ENCODE measurements at regions of chr19 and their contacts with region 1.

Region 1: GRCh38 chr19:16095071-16095571 is 16.6 kb upstream of the RAB8A start:
- DNase-seq: peak in 4 of 10 donors; percentile 36 to 64 (median 47)
- ATAC-seq: peak; percentile 78 to 82
- H3K4me3 Mint-ChIP-seq: peak overlapping the region; percentile 30 to 82 (median 69)
- H3K27ac Mint-ChIP-seq: peak overlapping the region; percentile 77 to 96 (median 88)
- H3K4me1 Mint-ChIP-seq: peaks cover 17 to 41% (median 33%) of the 10 kb centered on the region in 4 donors
- H3K27me3 Mint-ChIP-seq: no peaks in the 10 kb centered on the region

Region 2: DNA sequence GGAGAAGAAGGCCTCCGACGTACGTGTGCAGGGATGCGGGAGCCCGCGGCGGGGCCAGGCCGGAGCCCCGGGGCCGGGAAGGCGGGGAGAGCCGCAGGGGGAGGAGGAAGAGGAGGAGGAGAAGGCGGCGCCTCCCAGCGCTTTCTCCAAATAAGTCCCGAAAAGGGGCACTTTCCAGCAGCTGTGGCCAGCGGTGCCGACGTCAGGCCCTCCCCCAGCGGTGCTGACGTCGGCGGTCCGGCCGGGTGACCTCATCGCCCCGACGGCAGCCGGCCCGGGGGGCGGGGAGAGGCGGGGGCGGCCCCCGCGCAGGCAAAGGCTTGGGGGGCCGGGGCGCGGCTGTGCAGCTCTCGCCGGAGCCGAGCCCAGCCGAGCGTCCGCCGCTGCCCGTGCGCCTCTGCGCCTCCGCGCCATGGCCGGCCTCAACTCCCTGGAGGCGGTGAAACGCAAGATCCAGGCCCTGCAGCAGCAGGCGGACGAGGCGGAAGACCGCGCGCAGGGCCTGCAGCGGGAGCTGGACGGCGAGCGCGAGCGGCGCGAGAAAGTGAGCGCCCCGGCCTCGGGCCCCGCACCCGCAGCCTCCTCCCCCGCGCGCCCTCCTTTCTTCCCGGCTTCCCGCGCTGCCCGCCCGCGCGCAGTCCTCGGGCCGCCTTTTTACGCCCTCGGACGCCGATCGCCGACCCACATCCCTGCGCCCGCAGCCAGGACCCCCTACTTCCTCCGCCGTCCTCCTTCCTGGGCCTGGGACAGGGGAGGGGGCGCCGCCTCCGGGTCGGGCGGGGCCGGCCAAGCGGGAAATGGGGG is 18.8 kb before region 1 on chr19 and contains the start of gene TPM4:
- POLR2A ChIA-PET with region 1: interaction called, 12 read pairs
- DNase-seq: peak; percentile 53 to 86 (median 68)
- ATAC-seq: peak; percentile 35 to 43
- H3K4me3 Mint-ChIP-seq: peak within 1 kb of the TSS; percentile 79 to 93 (median 86)
- H3K27ac Mint-ChIP-seq: peak within 1 kb of the TSS; percentile 90 to 98 (median 96)
- H3K4me1 Mint-ChIP-seq: peaks cover 32 to 78% (median 70%) of the 10 kb centered on the region in 4 donors
- H3K27me3 Mint-ChIP-seq: no peaks in the 10 kb centered on the region
- polyA plus RNA-seq, gene TPM4: 27.4 to 30.8 (median 29.3) TPM

Region 3: DNA sequence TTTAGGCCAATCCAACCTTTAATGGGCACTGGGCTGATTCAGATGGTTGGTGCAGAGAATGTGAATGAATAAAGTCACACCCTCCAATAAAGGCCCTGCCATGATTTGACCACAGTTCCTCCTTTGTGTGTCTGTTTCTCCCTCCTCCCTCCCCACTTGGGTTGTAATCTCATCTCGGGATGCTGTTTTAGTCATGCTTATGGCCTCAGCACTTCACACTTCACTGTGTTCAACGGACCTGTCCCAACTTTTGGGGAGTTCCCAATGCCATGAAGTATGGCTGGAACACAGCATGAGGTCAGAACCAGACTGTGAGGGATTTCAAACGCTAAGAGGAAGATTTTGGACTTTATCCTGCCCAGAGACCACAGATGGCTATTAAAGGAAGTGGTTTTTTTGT is 11.0 kb after region 1 on chr19:
- POLR2A ChIA-PET with region 1: interaction called, 10 read pairs
- DNase-seq: no peak
- ATAC-seq: no peak
- H3K4me3 Mint-ChIP-seq: no peak overlapping the region
- H3K27ac Mint-ChIP-seq: peak overlapping the region in 3 of 10 donors; percentile 22 to 85 (median 44)
- H3K4me1 Mint-ChIP-seq: peaks cover under 1 to 12% (median 3%) of the 10 kb centered on the region in 4 donors
- H3K27me3 Mint-ChIP-seq: no peaks in the 10 kb centered on the region

Measured in naive thymus-derived CD8-positive, alpha-beta T cell (primary cell).